ENCODE measurements at regions of chr5 and their contacts with region 1.

Region 1: DNA sequence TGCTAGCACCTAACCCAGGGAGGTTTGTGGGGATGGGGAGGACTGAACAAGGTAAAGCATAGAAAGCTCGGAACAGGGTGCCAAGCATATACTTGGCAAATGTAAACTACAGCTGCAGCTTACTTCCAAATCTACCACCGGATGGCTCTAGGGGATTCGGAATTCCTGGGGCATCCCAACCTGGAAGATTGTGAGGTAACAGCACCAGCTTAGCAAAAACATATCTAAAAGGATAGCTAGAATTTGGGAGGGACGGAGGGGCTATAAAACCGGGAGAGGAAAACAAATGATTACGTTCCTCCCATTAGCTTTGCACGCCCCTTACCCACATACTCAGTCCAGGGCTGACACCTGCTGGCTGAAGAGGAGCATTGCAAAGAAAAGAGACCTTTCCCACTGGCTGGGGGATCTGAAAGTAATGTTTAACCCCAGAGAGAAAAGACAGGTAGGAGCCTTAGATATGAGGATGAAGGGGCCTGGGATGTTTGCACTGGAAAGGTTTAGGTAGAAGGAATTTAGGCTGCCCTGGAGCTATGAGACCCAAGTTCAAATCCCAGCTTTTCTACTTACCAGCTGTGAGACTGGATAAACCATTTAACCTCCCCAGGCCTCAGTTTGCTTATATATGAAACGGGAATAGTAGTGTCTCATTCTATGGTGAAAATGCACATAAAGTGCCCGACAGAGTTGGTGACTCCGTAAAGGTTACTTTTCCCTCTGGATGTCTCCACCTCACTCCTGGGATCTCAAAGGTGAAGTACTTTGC is 73.6 kb downstream of the FAM114A2 start:
- ATAC-seq: peak; percentile 66 to 84 (median 80)
- H3K4me3 ChIP-seq: no peak overlapping the region
- H3K27ac ChIP-seq: no peak overlapping the region
- H3K4me1 ChIP-seq: peaks cover 8 to 9% of the 10 kb centered on the region in 2 donors

Region 2: DNA sequence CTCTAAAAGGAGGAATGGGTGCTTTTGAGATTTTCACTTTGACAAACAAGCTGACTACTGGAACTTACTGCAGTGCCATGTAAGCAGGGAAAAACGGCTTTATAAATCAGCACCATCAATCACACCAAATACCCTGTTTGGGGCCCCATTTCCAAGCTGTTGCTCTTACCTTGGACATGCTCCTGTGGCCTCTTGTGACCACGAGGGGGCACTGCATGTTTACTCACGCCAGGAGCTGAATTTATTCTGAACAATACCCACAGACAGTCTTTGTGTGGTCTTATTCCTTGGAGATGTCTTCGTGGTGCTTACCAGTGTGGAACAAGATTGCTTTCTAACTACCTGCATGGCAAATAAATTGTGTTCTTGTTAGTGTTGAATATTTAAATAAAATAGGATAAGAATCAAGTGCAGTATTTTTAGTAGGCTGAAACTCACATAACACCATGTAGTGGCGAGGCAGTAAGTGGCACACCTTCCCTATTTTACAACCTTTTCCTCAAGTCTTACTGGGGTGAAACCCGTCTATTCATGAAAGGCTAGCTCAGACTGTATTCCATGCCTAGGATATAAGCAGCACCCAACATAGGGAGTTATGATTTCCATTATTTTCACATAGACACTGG is 1404.4 kb before region 1 on chr5:
- in situ Hi-C with region 1: loop called in 1 of 9 experiments (anchors 25 kb)
- ATAC-seq: peak; percentile 26 to 90 (median 72)
- H3K4me3 ChIP-seq: no peak overlapping the region
- H3K27ac ChIP-seq: no peak overlapping the region
- H3K4me1 ChIP-seq: peaks cover 22 to 24% of the 10 kb centered on the region in 2 donors

Region 3: DNA sequence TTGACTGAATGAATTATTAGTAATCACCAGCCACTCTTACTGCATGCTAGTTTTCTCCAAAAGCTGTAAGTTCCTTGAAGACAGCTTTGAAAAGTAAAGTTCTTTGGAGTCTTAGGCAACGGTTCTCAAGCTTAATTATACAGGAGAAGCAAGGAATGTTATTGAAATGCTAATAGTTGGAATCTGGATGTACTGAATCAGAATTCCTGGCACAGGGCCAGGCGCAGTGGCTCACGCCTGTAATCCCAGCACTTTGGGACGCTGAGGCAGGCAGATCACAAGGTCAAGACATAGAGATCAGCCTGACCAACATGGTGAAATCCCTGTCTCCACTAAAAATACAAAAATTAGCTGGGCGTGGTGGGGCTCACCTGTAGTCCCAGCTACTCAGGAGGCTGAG is 441.2 kb before region 1 on chr5:
- in situ Hi-C with region 1: loop called in 2 of 9 experiments (anchors 25 kb)
- ATAC-seq: peak; percentile 25 to 70 (median 44)
- H3K4me3 ChIP-seq: no peak overlapping the region
- H3K27ac ChIP-seq: no peak overlapping the region
- H3K4me1 ChIP-seq: peaks cover 25 to 31% of the 10 kb centered on the region in 2 donors

Region 4: DNA sequence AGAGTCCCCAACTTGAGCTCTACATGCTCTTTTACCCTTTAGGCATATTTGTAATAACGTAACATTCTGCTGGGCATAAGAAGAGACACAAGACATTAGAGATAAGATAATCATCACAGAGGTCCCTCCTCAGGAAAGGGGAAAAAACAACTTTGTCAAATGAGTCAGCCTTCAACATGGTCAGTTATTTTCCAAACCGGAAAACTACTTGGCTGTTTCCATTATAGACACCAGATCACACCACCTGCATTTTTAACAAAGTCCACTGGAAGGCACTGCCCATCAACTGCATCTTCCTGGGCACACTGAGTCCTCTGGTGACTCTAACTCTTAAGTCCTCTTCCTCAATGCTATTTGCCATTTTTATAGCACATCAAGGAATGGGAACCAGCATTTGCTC is 148.2 kb before region 1 on chr5:
- in situ Hi-C with region 1: loop called in 2 of 9 experiments (anchors 25 kb)
- ATAC-seq: no peak
- H3K4me3 ChIP-seq: no peak overlapping the region
- H3K27ac ChIP-seq: no peak overlapping the region
- H3K4me1 ChIP-seq: peaks cover 0 to 7% of the 10 kb centered on the region in 2 donors

Region 5: GRCh38 chr5:154211641-154212390 is 246.8 kb after region 1 on chr5:
- in situ Hi-C with region 1: no loop called
- ATAC-seq: peak in 4 of 8 experiments; percentile 29 to 57 (median 46)
- H3K4me3 ChIP-seq: no peak overlapping the region
- H3K27ac ChIP-seq: no peak overlapping the region
- H3K4me1 ChIP-seq: peaks cover 0 to 3% of the 10 kb centered on the region in 2 donors